ENCODE measurements at regions of chr2 and their contacts with region 1.

Region 1: GRCh38 chr2:68196120-68196716 is 38.5 kb downstream of the PNO1 start:
- DNase-seq: peak; percentile 16
- ATAC-seq: no peak
- H3K4me3 ChIP-seq: no peak overlapping the region
- H3K27ac ChIP-seq: no peak overlapping the region
- H3K4me1 ChIP-seq: peaks cover 24% of the 10 kb centered on the region
- H3K27me3 ChIP-seq: no peaks in the 10 kb centered on the region
- CTCF ChIP-seq: no peak
- EP300 ChIP-seq: no peak
- POLR2A ChIP-seq: no peak
- RAD21 ChIP-seq: no peak

Region 2: DNA sequence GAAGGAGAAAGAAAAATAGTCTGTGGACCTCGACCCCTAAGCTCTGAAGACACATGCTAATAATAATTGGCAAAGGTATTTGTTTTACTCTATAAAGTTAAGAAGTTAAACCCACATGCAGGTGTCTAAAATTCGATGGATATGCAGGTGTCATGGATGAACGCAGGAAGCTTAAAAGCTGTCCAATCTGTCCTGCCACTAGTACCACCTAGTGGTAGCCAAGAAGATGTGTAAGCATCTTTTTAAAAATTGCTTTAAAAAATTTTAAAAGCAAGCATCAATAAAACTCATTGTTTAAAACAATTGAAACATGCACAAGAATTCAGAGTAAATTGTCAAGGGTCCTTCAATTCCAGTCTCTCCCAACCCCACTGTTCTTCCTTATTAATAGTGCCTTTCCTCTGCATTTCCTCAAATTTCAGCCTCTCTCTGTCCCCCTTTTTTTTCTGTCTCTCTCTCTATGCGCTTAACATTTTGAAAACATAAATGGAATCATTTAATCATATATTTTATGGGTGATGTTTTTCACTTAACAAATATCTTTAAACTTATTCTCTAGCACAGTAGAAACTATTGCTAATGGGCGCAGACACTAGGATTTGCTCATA is 86.7 kb after region 1 on chr2:
- CTCF ChIA-PET with region 1: interaction called, 6 read pairs
- POLR2A ChIA-PET with region 1: no interaction called
- in situ Hi-C with region 1: no loop called
- intact Hi-C with region 1: loop called (anchors 10 kb)
- DNase-seq: peak; percentile 53
- ATAC-seq: peak; percentile 78
- H3K4me3 ChIP-seq: no peak overlapping the region
- H3K27ac ChIP-seq: no peak overlapping the region
- H3K4me1 ChIP-seq: peaks cover 9% of the 10 kb centered on the region
- H3K27me3 ChIP-seq: peaks cover 0 to 5% of the 10 kb centered on the region in 2 experiments; a peak in 1 of 5 replicates
- CTCF ChIP-seq: peak; percentile 72
- EP300 ChIP-seq: no peak
- POLR2A ChIP-seq: no peak
- RAD21 ChIP-seq: peak; percentile 58

Measured in HepG2 (cell line).